Caco-2 (cell line): ENCODE measurements at regions of chr4 and their contacts with region 1.

Region 1: GRCh38 chr4:98467627-98468072 is 190.8 kb downstream of the TSPAN5 start:
- DNase-seq: peak; percentile 82 to 84
- H3K4me3 ChIP-seq: peak overlapping the region; percentile 42
- H3K4me3 Mint-ChIP-seq: peak overlapping the region; percentile 78
- H3K27ac Mint-ChIP-seq: peak overlapping the region; percentile 55
- H3K4me1 ChIP-seq: no peaks in the 10 kb centered on the region; the same call in 1 of the 2 replicates
- H3K4me1 Mint-ChIP-seq: no peaks in the 10 kb centered on the region
- H3K27me3 ChIP-seq: no peaks in the 10 kb centered on the region
- H3K27me3 Mint-ChIP-seq: no peaks in the 10 kb centered on the region
- CTCF ChIP-seq: peak; percentile 42 to 67

Region 2: DNA sequence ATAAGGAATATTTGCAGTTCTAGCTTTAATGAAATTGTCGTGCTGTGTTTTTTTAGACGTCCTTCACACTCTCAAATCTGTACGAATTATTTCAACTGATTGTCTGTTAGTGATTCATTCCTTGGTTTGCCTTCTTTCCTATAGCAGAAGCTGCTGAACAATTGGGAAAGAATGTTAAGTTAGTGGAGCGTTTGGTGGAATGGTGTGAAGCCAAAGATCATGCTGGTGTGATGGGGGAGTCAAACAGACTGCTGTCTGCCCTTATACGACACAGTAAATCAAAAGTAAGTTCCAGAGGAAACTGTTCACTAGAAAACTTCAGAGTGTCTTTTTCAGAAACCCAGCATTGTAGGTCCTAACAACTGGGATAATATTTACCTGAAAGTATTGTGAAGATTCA is 46.5 kb before region 1 on chr4:
- CTCF ChIA-PET with region 1: no interaction called
- POLR2A ChIA-PET with region 1: no interaction called
- intact Hi-C with region 1: no loop called
- DNase-seq: no peak
- H3K4me3 ChIP-seq: no peak overlapping the region
- H3K4me3 Mint-ChIP-seq: no peak overlapping the region
- H3K27ac Mint-ChIP-seq: no peak overlapping the region
- H3K4me1 ChIP-seq: no peaks in the 10 kb centered on the region
- H3K4me1 Mint-ChIP-seq: no peaks in the 10 kb centered on the region
- H3K27me3 ChIP-seq: no peaks in the 10 kb centered on the region
- H3K27me3 Mint-ChIP-seq: no peaks in the 10 kb centered on the region
- CTCF ChIP-seq: no peak

Region 3: GRCh38 chr4:98625399-98625798 is 157.7 kb after region 1 on chr4:
- CTCF ChIA-PET with region 1: interaction called, 3 read pairs
- POLR2A ChIA-PET with region 1: no interaction called
- intact Hi-C with region 1: loop called (anchors 2 kb)
- DNase-seq: no peak
- H3K4me3 ChIP-seq: no peak overlapping the region
- H3K4me3 Mint-ChIP-seq: no peak overlapping the region
- H3K27ac Mint-ChIP-seq: no peak overlapping the region
- H3K4me1 ChIP-seq: peaks cover 37% of the 10 kb centered on the region
- H3K4me1 Mint-ChIP-seq: peaks cover 43% of the 10 kb centered on the region
- H3K27me3 ChIP-seq: no peaks in the 10 kb centered on the region
- H3K27me3 Mint-ChIP-seq: no peaks in the 10 kb centered on the region
- CTCF ChIP-seq: no peak

Region 4: GRCh38 chr4:98672583-98673287 is 205.1 kb after region 1 on chr4:
- CTCF ChIA-PET with region 1: no interaction called
- POLR2A ChIA-PET with region 1: no interaction called
- intact Hi-C with region 1: loop called (anchors 5 kb)
- DNase-seq: no peak
- H3K4me3 ChIP-seq: no peak overlapping the region
- H3K4me3 Mint-ChIP-seq: no peak overlapping the region
- H3K27ac Mint-ChIP-seq: no peak overlapping the region
- H3K4me1 ChIP-seq: peaks cover 25% of the 10 kb centered on the region
- H3K4me1 Mint-ChIP-seq: peaks cover 21% of the 10 kb centered on the region
- H3K27me3 ChIP-seq: no peaks in the 10 kb centered on the region
- H3K27me3 Mint-ChIP-seq: no peaks in the 10 kb centered on the region
- CTCF ChIP-seq: no peak

Region 5: GRCh38 chr4:98816815-98817214 is 349.2 kb after region 1 on chr4:
- CTCF ChIA-PET with region 1: no interaction called
- POLR2A ChIA-PET with region 1: no interaction called
- intact Hi-C with region 1: loop called (anchors 5 kb)
- DNase-seq: peak; percentile 81 to 84
- H3K4me3 ChIP-seq: no peak overlapping the region
- H3K4me3 Mint-ChIP-seq: no peak overlapping the region
- H3K27ac Mint-ChIP-seq: peak overlapping the region; percentile 94
- H3K4me1 ChIP-seq: peaks cover 42% of the 10 kb centered on the region
- H3K4me1 Mint-ChIP-seq: peaks cover 39% of the 10 kb centered on the region
- H3K27me3 ChIP-seq: no peaks in the 10 kb centered on the region
- H3K27me3 Mint-ChIP-seq: no peaks in the 10 kb centered on the region
- CTCF ChIP-seq: no peak

Region 6: GRCh38 chr4:98873059-98873458 is 405.4 kb after region 1 on chr4:
- CTCF ChIA-PET with region 1: no interaction called
- POLR2A ChIA-PET with region 1: no interaction called
- intact Hi-C with region 1: loop called (anchors 10 kb)
- DNase-seq: no peak
- H3K4me3 ChIP-seq: no peak overlapping the region
- H3K4me3 Mint-ChIP-seq: no peak overlapping the region
- H3K27ac Mint-ChIP-seq: no peak overlapping the region
- H3K4me1 ChIP-seq: no peaks in the 10 kb centered on the region
- H3K4me1 Mint-ChIP-seq: peaks cover 7% of the 10 kb centered on the region
- H3K27me3 ChIP-seq: no peaks in the 10 kb centered on the region
- H3K27me3 Mint-ChIP-seq: no peaks in the 10 kb centered on the region
- CTCF ChIP-seq: no peak

Region 7: DNA sequence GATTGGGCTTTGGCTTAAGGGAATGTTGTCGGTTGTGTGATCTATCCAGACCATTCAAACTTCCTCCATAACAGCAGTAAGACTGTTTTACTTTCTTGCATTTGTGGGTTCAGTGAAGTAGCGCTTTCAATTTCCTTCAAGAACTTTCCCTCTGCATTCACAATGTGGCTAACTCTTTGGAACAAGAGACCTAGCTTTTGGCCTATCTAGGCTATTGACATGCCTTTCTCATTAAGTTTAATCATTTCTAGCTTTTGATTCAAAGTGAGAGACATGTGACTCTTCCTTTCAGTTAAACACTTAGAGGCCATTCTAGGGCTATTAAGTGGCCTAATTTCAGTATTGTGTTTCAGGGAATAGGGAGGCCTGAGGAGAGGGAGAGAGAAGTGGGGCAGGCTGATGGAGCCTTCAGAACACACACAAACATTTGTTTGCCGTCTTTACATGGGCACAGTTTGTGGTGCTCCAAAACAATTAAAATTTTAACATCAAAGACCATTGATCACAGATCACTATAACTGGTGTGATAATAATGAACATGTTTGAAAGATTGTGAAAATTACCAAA is 586.9 kb after region 1 on chr4:
- CTCF ChIA-PET with region 1: interaction called, 4 read pairs
- POLR2A ChIA-PET with region 1: no interaction called
- intact Hi-C with region 1: loop called (anchors 1 kb)
- DNase-seq: no peak
- H3K4me3 ChIP-seq: no peak overlapping the region
- H3K4me3 Mint-ChIP-seq: no peak overlapping the region
- H3K27ac Mint-ChIP-seq: peak overlapping the region; percentile 69
- H3K4me1 ChIP-seq: peaks cover 6% of the 10 kb centered on the region; the same call in 1 of the 2 replicates
- H3K4me1 Mint-ChIP-seq: peaks cover 8% of the 10 kb centered on the region
- H3K27me3 ChIP-seq: no peaks in the 10 kb centered on the region
- H3K27me3 Mint-ChIP-seq: no peaks in the 10 kb centered on the region
- CTCF ChIP-seq: no peak